IMR-90 (cell line): ENCODE measurements at regions of chr3 and their contacts with region 1.

Region 1: DNA sequence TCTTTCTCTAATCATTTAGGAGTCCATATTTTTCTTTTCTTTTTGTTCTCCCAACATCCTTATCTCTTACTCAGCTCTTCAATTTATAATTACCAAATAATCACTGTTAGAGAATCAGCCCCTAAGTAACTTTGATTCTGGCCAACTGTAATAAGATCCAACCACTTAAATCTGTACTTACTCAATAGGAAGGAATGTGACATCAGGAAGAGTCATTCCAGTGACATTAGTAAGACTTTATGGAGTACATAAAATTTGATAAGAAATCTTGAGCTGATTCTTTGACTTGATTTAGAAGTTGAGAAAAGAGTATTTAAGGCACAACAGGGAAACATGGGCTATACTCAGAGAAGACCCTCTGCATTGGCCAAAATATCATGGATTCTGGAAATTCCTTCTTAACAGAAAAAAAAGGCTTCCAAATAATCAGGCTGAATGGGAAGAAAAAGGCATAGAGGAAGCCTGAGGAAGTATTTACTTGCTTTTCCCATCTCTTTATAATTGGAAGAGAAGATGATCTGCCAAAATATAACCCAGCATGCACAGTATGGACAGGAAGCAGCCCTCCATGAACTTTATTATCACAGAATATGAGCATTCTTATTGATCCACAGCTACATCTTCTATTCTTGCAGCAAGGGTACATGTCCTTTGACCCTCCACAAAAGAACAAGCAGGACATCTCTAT is 289.7 kb upstream of the TPRG1 start:
- DNase-seq: peak; percentile 95
- ATAC-seq: peak; percentile 88
- H3K4me3 ChIP-seq: no peak overlapping the region
- H3K27ac ChIP-seq: peak overlapping the region; percentile 52
- H3K4me1 ChIP-seq: peaks cover 3% of the 10 kb centered on the region; the same call in 1 of the 2 replicates
- H3K27me3 ChIP-seq: no peaks in the 10 kb centered on the region
- CTCF ChIP-seq: no peak
- POLR2A ChIP-seq: no peak
- RAD21 ChIP-seq: no peak

Region 2: GRCh38 chr3:188309437-188310269 is 572.4 kb before region 1 on chr3:
- CTCF ChIA-PET with region 1: no interaction called
- POLR2A ChIA-PET with region 1: no interaction called
- dilution Hi-C with region 1: no loop called
- in situ Hi-C with region 1: no loop called
- intact Hi-C with region 1: no loop called
- DNase-seq: no peak
- ATAC-seq: no peak
- H3K4me3 ChIP-seq: no peak overlapping the region
- H3K27ac ChIP-seq: no peak overlapping the region
- H3K4me1 ChIP-seq: peaks cover 4% of the 10 kb centered on the region; the same call in 1 of the 2 replicates
- H3K27me3 ChIP-seq: no peaks in the 10 kb centered on the region
- CTCF ChIP-seq: no peak
- POLR2A ChIP-seq: no peak
- RAD21 ChIP-seq: no peak

Region 3: GRCh38 chr3:188646592-188646991 is 235.5 kb before region 1 on chr3:
- CTCF ChIA-PET with region 1: no interaction called
- POLR2A ChIA-PET with region 1: no interaction called
- dilution Hi-C with region 1: no loop called
- in situ Hi-C with region 1: no loop called
- intact Hi-C with region 1: no loop called
- DNase-seq: peak; percentile 26
- ATAC-seq: no peak
- H3K4me3 ChIP-seq: no peak overlapping the region
- H3K27ac ChIP-seq: no peak overlapping the region
- H3K4me1 ChIP-seq: peaks cover 7% of the 10 kb centered on the region
- H3K27me3 ChIP-seq: no peaks in the 10 kb centered on the region
- CTCF ChIP-seq: no peak
- POLR2A ChIP-seq: no peak
- RAD21 ChIP-seq: no peak

Region 4: DNA sequence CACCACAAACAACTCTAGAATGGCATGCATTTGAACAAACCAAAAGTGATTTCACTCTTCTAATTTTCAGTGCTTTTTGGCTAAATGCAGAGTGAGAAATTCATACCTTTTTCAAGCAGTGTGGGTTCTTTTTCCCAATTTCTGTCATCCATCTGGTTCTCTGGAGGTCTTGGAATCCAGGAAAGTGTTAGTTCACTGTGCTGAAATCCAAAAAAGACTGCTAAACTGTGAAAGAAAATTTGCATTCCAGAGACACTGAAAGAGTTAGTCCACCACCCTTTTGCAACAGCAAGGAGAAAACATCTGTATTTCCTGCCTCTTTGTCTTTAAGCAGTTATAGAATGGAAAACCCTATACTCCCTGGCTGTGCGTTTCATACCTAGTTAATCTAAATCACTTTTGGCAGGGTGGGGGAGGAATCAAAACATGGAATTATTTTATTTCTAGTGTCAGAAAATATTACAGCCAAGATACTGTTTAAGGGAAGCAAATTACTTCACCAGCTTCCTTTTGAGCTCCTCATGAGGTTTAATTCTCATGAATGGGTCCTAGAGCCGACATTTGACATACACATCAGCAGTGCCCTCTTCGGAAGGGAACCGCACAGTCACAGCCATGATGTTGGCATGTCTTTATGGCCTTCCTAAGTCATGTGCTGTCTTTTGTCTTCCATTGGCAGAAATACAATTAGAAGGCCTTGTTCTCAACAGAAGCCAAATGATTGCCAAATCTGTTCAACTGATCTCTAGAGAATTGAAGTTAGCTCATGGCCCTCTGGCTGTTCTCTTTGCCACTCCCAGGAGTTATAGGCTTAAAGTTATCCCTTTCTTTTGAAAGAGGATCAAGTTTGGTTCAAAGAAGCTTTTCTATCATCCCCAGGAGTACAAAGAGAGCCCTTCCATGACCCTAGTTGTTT is 28.0 kb before region 1 on chr3:
- CTCF ChIA-PET with region 1: no interaction called
- POLR2A ChIA-PET with region 1: no interaction called
- dilution Hi-C with region 1: no loop called
- in situ Hi-C with region 1: no loop called
- intact Hi-C with region 1: loop called (anchors 1 kb)
- DNase-seq: peak; percentile 52
- ATAC-seq: peak; percentile 51
- H3K4me3 ChIP-seq: no peak overlapping the region
- H3K27ac ChIP-seq: peak overlapping the region; percentile 92
- H3K4me1 ChIP-seq: peaks cover 18% of the 10 kb centered on the region
- H3K27me3 ChIP-seq: no peaks in the 10 kb centered on the region
- CTCF ChIP-seq: no peak
- POLR2A ChIP-seq: no peak
- RAD21 ChIP-seq: no peak

Region 5: GRCh38 chr3:188936597-188937107 is 54.6 kb after region 1 on chr3:
- CTCF ChIA-PET with region 1: no interaction called
- POLR2A ChIA-PET with region 1: no interaction called
- dilution Hi-C with region 1: no loop called
- in situ Hi-C with region 1: no loop called
- intact Hi-C with region 1: no loop called
- DNase-seq: peak; percentile 22
- ATAC-seq: no peak
- H3K4me3 ChIP-seq: no peak overlapping the region
- H3K27ac ChIP-seq: no peak overlapping the region
- H3K4me1 ChIP-seq: 0 out of 2 replicates have a peak, but pooled peaks cover 2% of the 10 kb centered on the region
- H3K27me3 ChIP-seq: no peaks in the 10 kb centered on the region
- CTCF ChIP-seq: no peak
- POLR2A ChIP-seq: no peak
- RAD21 ChIP-seq: no peak